ENCODE measurements at regions of chr1 and their contacts with region 1.

Region 1: DNA sequence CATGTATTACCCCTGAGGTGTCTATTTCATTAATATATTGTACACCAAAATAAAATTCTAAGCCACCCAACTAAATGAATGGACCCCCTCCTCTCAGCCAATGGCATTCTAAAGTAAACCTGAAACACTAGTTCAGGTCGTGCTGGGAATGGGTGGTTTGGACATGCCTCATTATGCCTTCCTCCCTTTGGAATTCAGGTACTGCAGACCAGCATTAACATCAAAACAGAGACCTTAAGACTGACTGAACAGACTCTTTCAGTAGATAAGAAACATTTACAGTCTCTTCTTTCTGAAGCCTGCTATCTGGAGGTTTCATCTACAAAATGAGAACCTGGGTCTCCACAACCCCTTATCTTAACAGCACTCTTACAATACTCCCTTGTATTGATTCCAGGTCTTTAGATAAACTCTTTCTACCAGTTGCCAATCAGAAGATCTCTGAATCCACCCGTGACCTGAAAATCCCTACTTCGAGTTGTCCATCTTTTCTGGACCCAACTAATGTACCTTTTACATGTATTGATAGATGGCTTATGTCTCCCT is 93.6 kb downstream of the PKN2 start:
- DNase-seq: no peak
- ATAC-seq: no peak
- H3K4me3 ChIP-seq: no peak overlapping the region
- H3K27ac ChIP-seq: no peak overlapping the region
- H3K4me1 ChIP-seq: no peaks in the 10 kb centered on the region
- H3K27me3 ChIP-seq: no peaks in the 10 kb centered on the region
- CTCF ChIP-seq: no peak
- POLR2A ChIP-seq: no peak
- RAD21 ChIP-seq: no peak

Region 2: GRCh38 chr1:88286716-88287115 is 491.0 kb before region 1 on chr1:
- CTCF ChIA-PET with region 1: interaction called, 11 read pairs
- POLR2A ChIA-PET with region 1: no interaction called
- dilution Hi-C with region 1: no loop called
- in situ Hi-C with region 1: no loop called
- intact Hi-C with region 1: no loop called
- DNase-seq: no peak
- ATAC-seq: no peak
- H3K4me3 ChIP-seq: no peak overlapping the region
- H3K27ac ChIP-seq: no peak overlapping the region
- H3K4me1 ChIP-seq: no peaks in the 10 kb centered on the region
- H3K27me3 ChIP-seq: no peaks in the 10 kb centered on the region
- CTCF ChIP-seq: no peak
- POLR2A ChIP-seq: no peak
- RAD21 ChIP-seq: no peak

Region 3: GRCh38 chr1:89322402-89322801 is 544.7 kb after region 1 on chr1:
- CTCF ChIA-PET with region 1: no interaction called
- POLR2A ChIA-PET with region 1: no interaction called
- dilution Hi-C with region 1: no loop called
- in situ Hi-C with region 1: no loop called
- intact Hi-C with region 1: no loop called
- DNase-seq: no peak
- ATAC-seq: no peak
- H3K4me3 ChIP-seq: no peak overlapping the region
- H3K27ac ChIP-seq: no peak overlapping the region
- H3K4me1 ChIP-seq: no peaks in the 10 kb centered on the region
- H3K27me3 ChIP-seq: no peaks in the 10 kb centered on the region
- CTCF ChIP-seq: no peak
- POLR2A ChIP-seq: no peak
- RAD21 ChIP-seq: no peak